ENCODE measurements at regions of chr7 and their contacts with region 1.

Region 1: GRCh38 chr7:82729172-82730030 is 285.8 kb upstream of the CACNA2D1 start:
- DNase-seq: no peak
- H3K4me3 ChIP-seq: no peak overlapping the region
- H3K27ac ChIP-seq: no peak overlapping the region
- H3K27me3 ChIP-seq: no peaks in the 10 kb centered on the region
- CTCF ChIP-seq: peak in 54 of 56 donors; percentile 17 to 64 (median 46)

Region 2: DNA sequence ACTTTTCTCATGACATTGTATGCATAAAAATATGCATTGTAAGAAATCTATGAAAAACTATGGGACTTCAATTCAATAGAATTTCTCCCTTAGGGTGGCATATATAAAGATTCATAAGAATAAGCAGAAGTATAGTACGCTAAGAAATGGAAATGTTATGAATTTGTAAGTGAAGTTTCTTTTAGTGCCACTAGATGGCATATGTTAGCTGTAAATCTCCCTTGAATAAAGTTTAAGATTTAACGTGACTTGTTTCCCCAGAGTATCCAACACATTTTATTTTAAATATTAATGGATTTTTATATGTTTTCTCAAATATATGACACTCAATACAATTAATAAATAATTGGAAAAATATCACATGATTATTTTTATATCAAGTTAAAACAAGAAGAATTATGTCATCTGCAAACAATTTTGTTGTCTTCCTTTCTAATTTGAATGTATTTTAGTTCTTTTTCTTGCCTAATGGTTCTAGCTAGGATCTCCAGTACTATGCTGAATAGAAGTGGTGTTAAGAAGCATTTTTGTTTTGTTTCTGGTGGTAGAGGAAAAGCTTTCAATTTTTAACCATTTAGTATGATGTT is 1246.7 kb before region 1 on chr7:
- intact Hi-C with region 1: loop called (anchors 10 kb)
- DNase-seq: no peak
- H3K4me3 ChIP-seq: no peak overlapping the region
- H3K27ac ChIP-seq: no peak overlapping the region
- H3K27me3 ChIP-seq: no peaks in the 10 kb centered on the region
- CTCF ChIP-seq: peak; percentile 60 to 92 (median 78)

Region 3: GRCh38 chr7:82559193-82559805 is 170.1 kb before region 1 on chr7:
- intact Hi-C with region 1: no loop called
- DNase-seq: peak in 2 of 10 donors; percentile 14 to 44
- H3K4me3 ChIP-seq: peak overlapping the region in 53 of 59 donors; percentile 5 to 57 (median 33)
- H3K27ac ChIP-seq: no peak overlapping the region
- H3K27me3 ChIP-seq: no peaks in the 10 kb centered on the region
- CTCF ChIP-seq: no peak

Region 4: GRCh38 chr7:82694022-82694421 is 35.4 kb before region 1 on chr7:
- intact Hi-C with region 1: no loop called
- DNase-seq: no peak
- H3K4me3 ChIP-seq: no peak overlapping the region
- H3K27ac ChIP-seq: no peak overlapping the region
- H3K27me3 ChIP-seq: no peaks in the 10 kb centered on the region
- CTCF ChIP-seq: no peak

Region 5: GRCh38 chr7:82932516-82932915 is 203.1 kb after region 1 on chr7:
- intact Hi-C with region 1: no loop called
- DNase-seq: no peak
- H3K4me3 ChIP-seq: no peak overlapping the region
- H3K27ac ChIP-seq: no peak overlapping the region
- H3K27me3 ChIP-seq: no peaks in the 10 kb centered on the region
- CTCF ChIP-seq: no peak